PC-9 (cell line): ENCODE measurements at regions of chr3 and their contacts with region 1.

Region 1: DNA sequence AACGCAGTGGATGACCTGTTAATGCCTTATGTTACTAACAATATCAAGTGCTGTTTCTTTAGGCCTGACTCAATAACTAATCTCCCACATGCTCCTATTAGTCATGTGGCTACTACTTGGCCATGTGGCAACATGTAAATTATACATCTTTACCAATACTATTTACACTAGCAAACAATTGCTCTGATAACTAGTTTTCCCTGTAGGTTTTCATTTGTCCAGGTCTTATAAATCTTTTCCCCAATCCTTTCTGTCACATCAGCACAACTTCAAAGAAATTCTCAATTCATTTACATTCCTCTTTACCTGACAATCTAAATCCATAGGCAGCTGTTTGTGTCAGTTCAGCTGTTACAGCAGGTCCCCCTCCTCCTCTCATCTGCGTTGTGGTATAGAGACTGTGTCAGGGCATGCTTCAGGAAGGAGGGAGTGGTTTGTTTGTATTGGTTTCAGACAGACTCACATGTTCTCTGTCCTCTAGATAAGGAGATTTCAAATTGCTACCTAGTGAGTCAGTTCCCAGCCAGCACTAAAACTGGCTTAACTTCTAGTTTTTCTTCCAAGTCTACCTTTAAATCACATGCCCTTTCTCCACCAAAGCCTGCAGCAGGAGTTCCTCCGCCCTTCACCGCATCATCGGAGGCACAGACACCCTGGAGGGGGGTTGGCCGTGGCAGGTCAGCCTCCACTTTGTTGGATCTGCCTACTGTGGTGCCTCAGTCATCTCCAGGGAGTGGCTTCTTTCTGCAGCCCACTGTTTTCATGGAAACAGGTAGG is 11.3 kb upstream of the C3orf52 start:
- DNase-seq: peak; percentile 94 to 100
- H3K4me3 ChIP-seq: peak overlapping the region; percentile 35; the same call in 1 of the 2 replicates
- H3K27ac ChIP-seq: peak overlapping the region; percentile 78
- H3K4me1 ChIP-seq: peaks cover 28% of the 10 kb centered on the region
- H3K27me3 ChIP-seq: no peaks in the 10 kb centered on the region
- CTCF ChIP-seq: no peak

Region 2: DNA sequence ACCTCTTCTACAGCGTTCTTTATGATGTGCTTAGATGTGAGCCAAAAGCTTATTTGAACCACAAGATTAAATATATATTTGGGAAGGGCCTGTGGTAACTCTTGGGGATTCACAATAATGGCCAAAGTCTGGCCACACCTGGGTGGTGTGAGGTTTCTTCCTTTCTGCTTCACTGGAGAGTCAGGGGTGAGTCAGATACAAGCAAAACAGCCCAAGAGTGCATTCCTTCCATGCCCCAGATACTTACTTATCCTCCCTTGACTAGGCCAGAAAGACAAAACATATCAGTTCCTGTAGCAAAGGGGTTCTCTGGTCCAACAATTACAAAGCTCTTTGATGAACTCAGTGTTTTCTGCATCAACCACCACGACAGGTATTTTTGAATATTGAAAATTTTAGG is 480.7 kb before region 1 on chr3:
- CTCF ChIA-PET with region 1: no interaction called
- POLR2A ChIA-PET with region 1: no interaction called
- intact Hi-C with region 1: loop called (anchors 1 kb)
- DNase-seq: peak; percentile 74 to 92
- H3K4me3 ChIP-seq: no peak overlapping the region
- H3K27ac ChIP-seq: peak overlapping the region; percentile 57
- H3K4me1 ChIP-seq: peaks cover 28% of the 10 kb centered on the region
- H3K27me3 ChIP-seq: no peaks in the 10 kb centered on the region
- CTCF ChIP-seq: no peak

Region 3: GRCh38 chr3:112086076-112086854 is 11.4 kb after region 1 on chr3 and contains the start of gene C3orf52:
- CTCF ChIA-PET with region 1: no interaction called
- POLR2A ChIA-PET with region 1: no interaction called
- intact Hi-C with region 1: loop called (anchors 1 kb)
- DNase-seq: peak; percentile 87 to 94
- H3K4me3 ChIP-seq: peak within 1 kb of the TSS; percentile 80
- H3K27ac ChIP-seq: peak within 1 kb of the TSS; percentile 81
- H3K4me1 ChIP-seq: peaks cover 47% of the 10 kb centered on the region
- H3K27me3 ChIP-seq: no peaks in the 10 kb centered on the region
- CTCF ChIP-seq: no peak; the same call in 1 of the 2 replicates
- total RNA-seq, gene C3orf52: 7.5 and 9.9 TPM in 2 replicates

Region 4: DNA sequence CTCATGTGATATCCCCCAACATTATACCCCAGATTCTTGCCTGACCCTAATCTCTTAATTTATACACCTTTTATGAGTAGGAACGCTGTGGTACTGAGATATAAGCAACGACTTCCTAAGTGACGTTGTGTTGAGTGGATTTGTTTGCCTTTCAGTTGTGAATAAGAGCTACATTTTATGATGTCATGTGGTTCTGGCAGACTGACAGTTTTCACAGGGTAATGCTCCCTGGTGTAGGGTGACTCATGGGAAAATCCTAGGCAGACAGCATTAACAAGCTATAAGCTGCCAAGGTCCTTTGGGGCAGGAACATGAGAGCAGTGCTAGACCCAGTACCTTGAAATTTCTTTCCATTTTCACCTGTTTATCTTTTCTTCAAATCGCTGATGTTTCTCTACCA is 22.5 kb after region 1 on chr3:
- CTCF ChIA-PET with region 1: no interaction called
- POLR2A ChIA-PET with region 1: no interaction called
- intact Hi-C with region 1: loop called (anchors 1 kb)
- DNase-seq: peak; percentile 74 to 99
- H3K4me3 ChIP-seq: no peak overlapping the region
- H3K27ac ChIP-seq: peak overlapping the region; percentile 62
- H3K4me1 ChIP-seq: peaks cover 17% of the 10 kb centered on the region
- H3K27me3 ChIP-seq: no peaks in the 10 kb centered on the region
- CTCF ChIP-seq: no peak